GM10248 (cell line): ENCODE measurements at regions of chr2 and their contacts with region 1.

Region 1: GRCh38 chr2:195891081-195891480 is 177.6 kb downstream of the DNAH7 start:
- DNase-seq: no peak
- CTCF ChIP-seq: no peak

Region 2: GRCh38 chr2:195732574-195732973 is 158.5 kb before region 1 on chr2:
- CTCF ChIA-PET with region 1: no interaction called
- POLR2A ChIA-PET with region 1: no interaction called
- DNase-seq: no peak
- CTCF ChIP-seq: no peak

Region 3: GRCh38 chr2:195857132-195857531 is 33.9 kb before region 1 on chr2:
- CTCF ChIA-PET with region 1: no interaction called
- POLR2A ChIA-PET with region 1: no interaction called
- DNase-seq: no peak
- CTCF ChIP-seq: no peak

Region 4: DNA sequence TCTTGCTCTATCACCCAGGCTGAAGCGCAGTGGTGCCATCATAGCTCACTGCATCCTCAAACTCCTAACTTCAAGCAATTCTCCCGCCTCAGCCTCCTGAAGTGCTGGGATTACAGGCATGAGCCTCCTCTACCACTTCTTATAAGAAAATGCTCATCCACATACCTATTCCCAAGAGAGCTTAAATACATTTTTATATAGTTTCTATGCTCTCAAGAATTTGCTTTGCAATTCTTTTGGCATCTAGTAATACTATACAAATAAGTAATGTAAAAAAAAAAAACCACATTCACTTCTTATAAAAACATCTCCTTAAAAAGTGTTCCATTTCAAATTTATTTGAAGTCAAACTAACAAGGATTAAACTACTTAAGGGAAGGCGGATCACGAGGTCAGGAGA is 19.8 kb before region 1 on chr2:
- CTCF ChIA-PET with region 1: interaction called, 12 read pairs
- POLR2A ChIA-PET with region 1: no interaction called
- DNase-seq: no peak
- CTCF ChIP-seq: no peak